AG04449 (cell line): ENCODE measurements at regions of chr11 and their contacts with region 1.

Region 1: DNA sequence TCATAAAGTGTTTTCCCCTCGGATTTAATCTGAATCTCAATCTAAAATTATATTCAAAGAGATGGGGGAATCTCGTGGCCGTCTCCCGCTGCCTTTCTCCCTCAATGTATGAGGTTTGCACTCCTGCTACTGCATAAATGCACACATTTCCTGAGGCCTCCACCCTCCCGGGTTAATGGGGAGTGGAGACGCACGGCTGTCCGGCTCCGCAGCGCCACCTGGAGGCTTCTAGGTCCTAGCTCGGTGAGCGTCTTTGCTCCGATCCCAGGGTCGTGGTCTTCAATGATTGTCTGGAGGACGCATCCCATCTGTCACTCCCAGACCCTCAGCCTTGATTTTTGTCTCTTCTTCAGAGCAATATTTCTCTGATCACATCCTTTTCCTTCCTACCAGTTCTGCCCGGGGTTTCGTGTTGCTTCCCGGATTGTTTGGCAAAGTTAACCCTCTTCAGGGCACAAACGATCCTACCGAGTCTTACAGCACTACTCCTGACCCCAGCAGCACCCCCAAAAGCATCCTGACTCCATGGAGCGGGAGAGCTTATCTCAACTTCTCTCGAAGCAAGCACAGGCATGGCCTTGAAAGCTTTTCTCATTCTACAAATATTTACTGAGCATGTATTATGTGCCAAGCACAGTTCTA is at the start of gene LMO1:
- DNase-seq: no peak
- H3K4me3 ChIP-seq: peak within 1 kb of the TSS; percentile 45
- CTCF ChIP-seq: peak; percentile 95

Region 2: DNA sequence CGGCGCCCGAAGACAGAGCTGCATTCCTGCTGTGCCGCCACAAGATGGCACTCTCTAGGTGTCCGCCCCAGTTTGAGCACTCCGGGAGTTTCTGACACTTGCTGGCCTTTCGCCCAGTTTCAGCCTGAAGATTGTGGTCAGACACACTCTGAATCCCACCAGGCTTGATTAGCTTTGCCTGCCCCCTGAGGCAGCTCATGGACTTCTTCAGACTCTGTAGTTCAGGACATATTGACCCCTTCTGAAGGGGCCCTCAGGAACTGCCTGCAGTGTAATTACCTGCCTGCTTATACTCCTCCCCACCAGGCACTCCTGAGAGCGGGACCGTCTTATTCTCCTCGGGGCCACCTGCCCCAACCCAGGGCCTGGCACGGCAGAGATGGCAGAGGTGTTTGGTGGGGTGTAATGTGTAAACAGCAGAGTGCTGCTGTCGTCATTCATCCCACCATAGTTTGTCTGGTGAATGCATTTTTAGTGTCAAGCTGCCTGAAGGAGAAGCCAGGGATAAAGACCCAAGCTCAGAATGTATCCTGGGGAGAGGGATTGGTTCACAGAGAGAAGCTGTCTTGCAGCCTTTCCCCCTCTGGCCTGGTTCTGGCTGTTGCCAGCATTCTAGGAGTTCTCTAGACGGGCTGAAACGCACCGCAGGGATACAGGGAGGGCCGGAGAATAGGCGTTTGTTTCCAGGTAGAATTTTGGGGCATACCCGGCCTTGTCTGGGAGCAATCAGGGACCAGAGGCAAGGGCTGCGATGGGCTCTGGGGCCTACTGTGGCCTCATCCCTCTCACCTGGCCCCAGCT is 230.4 kb before region 1 on chr11:
- CTCF ChIA-PET with region 1: no interaction called
- POLR2A ChIA-PET with region 1: no interaction called
- DNase-seq: no peak
- H3K4me3 ChIP-seq: no peak overlapping the region
- CTCF ChIP-seq: peak; percentile 90

Region 3: GRCh38 chr11:8206251-8207079 is 57.4 kb before region 1 on chr11:
- CTCF ChIA-PET with region 1: interaction called, 10 read pairs
- POLR2A ChIA-PET with region 1: no interaction called
- DNase-seq: no peak
- H3K4me3 ChIP-seq: no peak overlapping the region
- CTCF ChIP-seq: no peak

Region 4: GRCh38 chr11:8247312-8247711 is 16.6 kb before region 1 on chr11:
- CTCF ChIA-PET with region 1: interaction called, 38 read pairs
- POLR2A ChIA-PET with region 1: no interaction called
- DNase-seq: no peak
- H3K4me3 ChIP-seq: no peak overlapping the region
- CTCF ChIP-seq: peak; percentile 36

Region 5: DNA sequence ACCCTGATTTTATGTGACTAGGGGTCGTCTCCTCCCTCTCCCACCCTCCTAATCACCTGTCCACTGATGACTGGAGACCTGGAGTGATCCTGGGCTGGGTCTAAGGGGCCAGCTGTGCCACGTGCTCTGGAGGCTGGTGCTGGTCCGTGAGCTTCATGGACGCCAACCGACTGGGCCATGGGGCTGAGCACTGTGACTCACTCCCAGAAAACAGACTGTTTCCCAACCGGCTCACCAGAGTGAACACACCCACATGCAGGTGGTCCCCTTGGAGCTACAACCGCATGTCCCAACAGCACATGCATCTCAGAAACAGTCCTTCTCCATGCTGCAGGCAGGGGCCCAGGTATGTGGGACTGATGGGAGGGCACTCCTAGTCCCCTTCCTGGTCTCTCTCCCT is 13.8 kb after region 1 on chr11:
- CTCF ChIA-PET with region 1: interaction called, 28 read pairs
- POLR2A ChIA-PET with region 1: no interaction called
- DNase-seq: no peak
- H3K4me3 ChIP-seq: no peak overlapping the region
- CTCF ChIP-seq: no peak

Region 6: GRCh38 chr11:8566613-8567210 is 302.8 kb after region 1 on chr11:
- CTCF ChIA-PET with region 1: interaction called, 29 read pairs
- POLR2A ChIA-PET with region 1: no interaction called
- DNase-seq: no peak
- H3K4me3 ChIP-seq: no peak overlapping the region
- CTCF ChIP-seq: peak; percentile 18